A673 (cell line): ENCODE measurements at regions of chr2 and their contacts with region 1.

Region 1: DNA sequence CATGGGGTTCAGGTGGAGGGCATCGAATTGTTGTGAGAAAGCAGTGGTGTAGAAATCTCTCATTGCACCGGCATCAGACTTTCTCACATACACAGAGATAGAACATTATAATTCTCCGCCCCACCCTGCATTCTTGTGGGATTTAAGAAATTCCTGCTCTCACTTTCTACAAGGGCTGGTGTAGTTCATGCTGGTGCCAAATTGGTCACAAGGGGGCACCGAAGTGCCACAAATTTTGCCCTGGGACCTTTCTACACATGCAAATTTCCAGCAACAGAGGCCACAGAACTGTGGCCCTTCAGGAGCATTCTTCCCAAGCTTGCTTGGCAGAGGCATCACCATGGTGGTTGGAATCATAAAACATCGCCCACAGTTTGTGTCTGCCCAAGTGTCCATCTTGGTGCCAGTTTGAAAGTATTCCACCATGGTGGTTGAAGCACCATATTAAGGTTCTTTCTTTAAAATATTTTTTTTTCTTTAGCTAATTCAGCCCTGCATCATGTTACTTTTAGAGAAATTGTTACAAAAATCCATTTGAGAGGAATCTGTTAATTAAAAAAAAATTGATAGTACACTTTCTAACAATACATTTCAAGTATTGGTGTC is 521.2 kb upstream of the FANCL start:
- DNase-seq: peak; percentile 77
- H3K4me3 ChIP-seq: no peak overlapping the region
- H3K27ac ChIP-seq: no peak overlapping the region
- H3K4me1 ChIP-seq: no peaks in the 10 kb centered on the region
- H3K27me3 ChIP-seq: no peaks in the 10 kb centered on the region
- CTCF ChIP-seq: peak; percentile 71

Region 2: DNA sequence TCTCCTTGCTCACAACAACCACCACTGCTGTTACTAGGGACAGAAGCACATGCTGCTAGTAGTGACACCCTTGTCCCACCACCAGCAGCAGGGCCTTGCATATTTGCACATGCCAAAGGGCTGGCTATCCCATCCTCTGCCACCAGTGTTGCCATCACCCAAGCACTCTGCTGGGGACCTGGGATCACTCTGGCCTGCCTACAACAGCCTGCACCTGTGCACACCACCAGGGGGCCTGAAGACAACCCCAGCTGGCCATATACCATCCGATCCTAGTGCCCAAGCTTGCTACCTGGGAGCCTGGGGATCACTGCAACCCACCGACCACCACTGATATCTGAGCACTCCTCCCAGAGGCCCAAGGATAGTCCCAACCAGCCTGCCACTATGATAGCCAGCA is 421.2 kb before region 1 on chr2:
- CTCF ChIA-PET with region 1: no interaction called
- POLR2A ChIA-PET with region 1: no interaction called
- intact Hi-C with region 1: no loop called
- DNase-seq: no peak
- H3K4me3 ChIP-seq: no peak overlapping the region
- H3K27ac ChIP-seq: no peak overlapping the region
- H3K4me1 ChIP-seq: no peaks in the 10 kb centered on the region
- H3K27me3 ChIP-seq: no peaks in the 10 kb centered on the region
- CTCF ChIP-seq: no peak

Region 3: GRCh38 chr2:58788402-58788801 is 26.1 kb after region 1 on chr2:
- CTCF ChIA-PET with region 1: no interaction called
- POLR2A ChIA-PET with region 1: no interaction called
- intact Hi-C with region 1: no loop called
- DNase-seq: no peak
- H3K4me3 ChIP-seq: no peak overlapping the region
- H3K27ac ChIP-seq: no peak overlapping the region
- H3K4me1 ChIP-seq: no peaks in the 10 kb centered on the region
- H3K27me3 ChIP-seq: no peaks in the 10 kb centered on the region
- CTCF ChIP-seq: no peak

Region 4: DNA sequence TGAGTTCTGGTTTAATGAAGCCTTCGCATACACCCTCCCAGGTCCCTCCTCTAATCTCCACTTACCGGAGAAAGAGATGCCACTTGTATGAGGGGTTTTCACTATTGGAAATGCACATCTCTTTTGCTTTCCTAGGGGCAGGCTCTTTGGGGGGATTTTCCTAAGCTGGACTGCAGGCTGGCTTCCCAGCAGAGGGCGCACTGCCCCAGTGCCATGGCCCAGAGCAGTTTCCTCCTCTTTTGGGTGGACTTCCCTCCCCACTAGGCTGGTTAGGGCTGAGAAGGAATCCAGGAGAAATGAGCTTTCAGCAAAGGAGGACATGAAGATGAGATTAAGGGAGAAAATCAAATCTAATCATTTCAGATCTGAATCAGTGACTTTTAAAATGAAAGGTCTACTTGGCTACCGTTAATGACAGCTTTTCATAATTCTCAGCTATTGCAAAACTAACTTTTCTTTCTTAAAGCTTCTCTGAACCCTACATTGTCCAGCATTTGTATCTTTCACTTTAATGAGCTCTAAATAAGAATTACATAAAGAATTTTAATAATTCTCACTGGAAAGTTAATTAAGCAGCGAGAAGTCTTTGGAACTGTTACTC is 263.0 kb after region 1 on chr2:
- CTCF ChIA-PET with region 1: no interaction called
- POLR2A ChIA-PET with region 1: no interaction called
- intact Hi-C with region 1: loop called (anchors 10 kb)
- DNase-seq: peak; percentile 58
- H3K4me3 ChIP-seq: no peak overlapping the region
- H3K27ac ChIP-seq: no peak overlapping the region
- H3K4me1 ChIP-seq: no peaks in the 10 kb centered on the region
- H3K27me3 ChIP-seq: no peaks in the 10 kb centered on the region
- CTCF ChIP-seq: peak; percentile 93

Region 5: DNA sequence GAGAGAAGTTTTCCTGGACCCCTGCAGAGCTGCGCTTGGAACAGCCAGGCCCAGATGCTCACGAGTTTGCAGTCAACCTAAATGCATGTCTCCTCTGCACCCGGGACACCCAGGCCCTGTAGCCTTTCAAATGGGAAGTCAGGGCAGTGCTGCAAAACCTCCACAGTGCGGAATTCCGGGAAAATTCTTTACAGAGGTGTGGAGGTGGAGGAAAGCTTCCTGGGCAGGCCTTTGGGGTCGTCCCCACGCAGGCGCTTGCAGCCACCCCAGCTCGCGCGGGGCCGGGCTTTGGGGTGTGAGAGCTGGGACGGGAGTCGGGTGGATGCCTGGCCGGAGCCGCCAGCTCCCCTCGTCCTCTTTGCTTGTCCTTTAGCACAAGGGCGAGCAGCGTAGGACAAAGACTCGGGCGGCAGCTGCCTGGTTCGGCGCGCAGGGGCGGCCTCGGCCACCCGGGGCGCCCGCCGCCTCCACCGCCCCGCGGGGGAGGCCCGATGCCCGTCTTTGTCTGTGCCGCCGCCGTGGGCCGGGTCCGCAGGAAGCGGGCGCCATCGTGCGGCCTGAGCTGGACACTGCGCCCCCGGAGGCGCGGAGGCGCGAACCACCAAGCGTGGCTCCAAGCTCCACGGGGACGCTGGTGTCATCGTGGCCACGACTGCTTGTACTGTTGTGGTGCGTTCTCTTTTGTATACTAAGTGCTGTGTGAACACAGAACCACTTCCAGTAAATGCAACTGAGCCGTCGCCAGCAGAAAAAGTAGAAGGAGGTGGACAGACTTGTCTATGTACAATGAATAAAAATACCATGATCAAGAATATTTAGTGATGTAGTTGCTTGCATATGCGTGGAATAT is 1819.4 kb after region 1 on chr2:
- CTCF ChIA-PET with region 1: no interaction called
- POLR2A ChIA-PET with region 1: no interaction called
- intact Hi-C with region 1: loop called (anchors 5 kb)
- DNase-seq: peak; percentile 76
- H3K4me3 ChIP-seq: peak overlapping the region; percentile 43
- H3K27ac ChIP-seq: no peak overlapping the region
- H3K4me1 ChIP-seq: peaks cover 8% of the 10 kb centered on the region
- H3K27me3 ChIP-seq: peaks cover 23% of the 10 kb centered on the region
- CTCF ChIP-seq: peak; percentile 87